ENCODE measurements at regions of chr4 and their contacts with region 1.

Region 1: GRCh38 chr4:35918491-35918977 is 325.8 kb downstream of the ARAP2 start:
- DNase-seq: no peak
- H3K4me3 ChIP-seq: no peak overlapping the region
- H3K27ac ChIP-seq: no peak overlapping the region
- H3K4me1 ChIP-seq: no peaks in the 10 kb centered on the region
- H3K27me3 ChIP-seq: no peaks in the 10 kb centered on the region
- CTCF ChIP-seq: no peak
- EP300 ChIP-seq: no peak
- POLR2A ChIP-seq: no peak

Region 2: GRCh38 chr4:34972189-34972588 is 946.3 kb before region 1 on chr4:
- in situ Hi-C with region 1: no loop called
- intact Hi-C with region 1: loop called (anchors 5 kb)
- DNase-seq: no peak
- H3K4me3 ChIP-seq: no peak overlapping the region
- H3K27ac ChIP-seq: no peak overlapping the region
- H3K4me1 ChIP-seq: no peaks in the 10 kb centered on the region
- H3K27me3 ChIP-seq: no peaks in the 10 kb centered on the region
- CTCF ChIP-seq: no peak
- EP300 ChIP-seq: no peak
- POLR2A ChIP-seq: no peak

Region 3: DNA sequence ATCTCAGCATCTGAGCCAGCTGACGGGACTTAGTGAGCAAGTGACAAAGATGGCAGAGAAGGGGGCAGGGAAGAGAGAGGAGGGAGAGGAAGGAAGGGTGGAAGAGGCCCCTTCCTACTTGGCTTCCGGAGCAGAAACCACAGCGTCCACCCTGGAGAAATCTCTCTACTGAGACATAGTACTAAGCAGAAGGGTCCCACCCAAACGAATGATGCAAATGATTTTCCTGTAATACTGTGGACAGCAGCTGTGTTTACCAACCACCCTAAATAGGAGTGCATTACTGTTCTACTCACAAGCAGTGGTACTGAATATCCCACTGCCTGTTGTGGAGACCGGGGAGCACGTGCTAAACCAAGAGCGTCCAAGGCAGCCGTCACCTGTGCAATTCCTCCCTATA is 392.3 kb after region 1 on chr4:
- in situ Hi-C with region 1: no loop called
- intact Hi-C with region 1: no loop called
- DNase-seq: peak; percentile 23
- H3K4me3 ChIP-seq: no peak overlapping the region
- H3K27ac ChIP-seq: no peak overlapping the region
- H3K4me1 ChIP-seq: no peaks in the 10 kb centered on the region
- H3K27me3 ChIP-seq: no peaks in the 10 kb centered on the region
- CTCF ChIP-seq: no peak
- EP300 ChIP-seq: no peak
- POLR2A ChIP-seq: no peak